ENCODE measurements at regions of chr1 and their contacts with region 1.

Region 1: DNA sequence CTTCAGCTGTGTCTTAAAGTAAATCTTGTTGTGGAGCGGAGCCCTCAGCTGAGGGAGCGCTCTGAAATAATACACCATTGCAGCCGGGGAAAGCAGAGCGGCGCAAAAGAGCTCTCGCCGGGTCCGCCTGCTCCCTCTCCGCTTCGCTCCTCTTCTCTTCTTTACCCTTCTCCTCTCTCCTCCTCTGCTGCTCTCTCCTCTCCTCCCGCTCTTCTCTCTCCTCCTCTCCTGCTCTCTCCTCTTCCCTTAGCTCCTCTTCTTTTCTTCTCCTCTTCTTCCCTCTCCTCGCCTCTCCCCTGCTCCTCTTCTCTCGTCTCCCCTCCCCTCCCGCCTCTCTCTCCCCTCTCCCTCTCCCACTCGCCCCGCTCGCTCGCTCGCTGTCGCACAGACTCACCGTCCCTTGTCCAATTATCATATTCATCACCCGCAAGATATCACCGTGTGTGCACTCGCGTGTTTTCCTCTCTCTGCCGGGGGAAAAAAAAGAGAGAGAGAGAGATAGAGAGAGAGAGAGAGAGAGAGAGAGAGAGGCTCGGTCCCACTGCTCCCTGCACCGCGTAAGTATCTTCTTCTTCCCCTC is at the start of gene PROX1:
- DNase-seq: peak in 1 of 10 donors; percentile 86
- H3K4me3 ChIP-seq: peak within 1 kb of the TSS; percentile 45 to 87 (median 67)
- H3K27ac ChIP-seq: peak within 1 kb of the TSS in 58 of 59 donors; percentile 50 to 96 (median 87)
- H3K27me3 ChIP-seq: peaks cover 0 to 76% (median 39%) of the 10 kb centered on the region in 45 donors
- CTCF ChIP-seq: peak in 10 of 56 donors; percentile 0 to 31 (median 22)
- total RNA-seq, gene PROX1: 15.7 to 146 (median 33.4) TPM

Region 2: DNA sequence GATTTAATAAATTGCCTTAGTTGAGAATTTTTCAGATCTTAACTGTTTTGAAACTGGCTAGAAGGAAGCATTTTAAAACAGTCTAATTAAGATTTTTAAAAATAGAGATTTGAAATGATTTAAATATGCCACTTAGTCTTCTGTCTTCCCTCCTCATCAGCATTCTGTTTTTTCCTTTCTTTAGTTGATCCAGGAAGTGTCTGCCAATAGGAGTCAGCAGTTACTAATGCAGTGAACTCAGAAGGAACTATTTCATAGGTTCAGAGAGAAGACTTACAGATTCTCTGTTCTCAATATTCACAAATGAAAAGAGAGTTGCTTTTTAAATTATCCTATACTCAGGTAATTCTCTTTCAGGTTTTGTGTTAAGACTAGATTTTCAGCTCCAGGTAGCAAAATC is 852.4 kb before region 1 on chr1:
- intact Hi-C with region 1: loop called in 1 of 2 experiments (anchors 5 kb)
- DNase-seq: no peak
- H3K4me3 ChIP-seq: no peak overlapping the region
- H3K27ac ChIP-seq: no peak overlapping the region
- H3K27me3 ChIP-seq: no peaks in the 10 kb centered on the region
- CTCF ChIP-seq: peak in 3 of 56 donors; percentile 14 to 37 (median 17)

Region 3: GRCh38 chr1:213244664-213245091 is 743.3 kb before region 1 on chr1:
- intact Hi-C with region 1: loop called in 1 of 2 experiments (anchors 10 kb)
- DNase-seq: peak in 1 of 10 donors; percentile 49
- H3K4me3 ChIP-seq: no peak overlapping the region
- H3K27ac ChIP-seq: no peak overlapping the region
- H3K27me3 ChIP-seq: no peaks in the 10 kb centered on the region
- CTCF ChIP-seq: peak; percentile 72 to 96 (median 86)

Region 4: GRCh38 chr1:213374369-213374768 is 613.6 kb before region 1 on chr1:
- intact Hi-C with region 1: loop called in 1 of 2 experiments (anchors 5 kb)
- DNase-seq: peak in 9 of 10 donors; percentile 50 to 77 (median 68)
- H3K4me3 ChIP-seq: no peak overlapping the region
- H3K27ac ChIP-seq: no peak overlapping the region
- H3K27me3 ChIP-seq: no peaks in the 10 kb centered on the region
- CTCF ChIP-seq: peak; percentile 76 to 95 (median 86)

Region 5: GRCh38 chr1:214002472-214002871 is 14.5 kb after region 1 on chr1:
- intact Hi-C with region 1: no loop called
- DNase-seq: no peak
- H3K4me3 ChIP-seq: peak overlapping the region in 14 of 59 donors; percentile 0 to 33 (median 16)
- H3K27ac ChIP-seq: peak overlapping the region in 57 of 59 donors; percentile 23 to 96 (median 81)
- H3K27me3 ChIP-seq: peaks cover 0 to 2% (median 0%) of the 10 kb centered on the region in 45 donors
- CTCF ChIP-seq: no peak

Region 6: DNA sequence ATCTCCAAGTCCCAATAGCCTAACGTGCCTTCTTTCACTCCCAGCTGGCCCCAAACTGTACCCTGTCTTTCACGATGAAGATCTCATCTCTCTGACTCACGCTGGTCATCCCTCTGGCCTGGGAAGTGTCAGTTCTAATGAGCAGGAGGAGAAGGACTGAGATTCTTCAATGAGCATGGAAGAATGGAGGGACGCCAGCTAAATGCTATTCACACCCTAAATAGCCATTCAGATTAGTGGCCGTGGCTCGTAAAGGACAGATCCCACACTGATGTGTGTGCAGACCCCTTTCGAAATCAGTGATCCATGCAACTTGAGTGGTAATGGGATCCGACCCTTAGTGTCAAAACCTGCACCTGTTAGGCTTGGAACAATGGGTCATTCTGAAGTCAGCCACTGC is 217.0 kb after region 1 on chr1:
- intact Hi-C with region 1: loop called in 1 of 2 experiments (anchors 10 kb)
- DNase-seq: no peak
- H3K4me3 ChIP-seq: no peak overlapping the region
- H3K27ac ChIP-seq: no peak overlapping the region
- H3K27me3 ChIP-seq: peaks cover 0 to 3% (median 0%) of the 10 kb centered on the region in 45 donors
- CTCF ChIP-seq: no peak

Measured in dorsolateral prefrontal cortex (tissue), 120 donors.